Activated naive CD4-positive, alpha-beta T cell treated with anti-CD3 and anti-CD28 coated beads for 36 hours (primary cell): ENCODE measurements at regions of chr16 and their contacts with region 1.

Region 1: GRCh38 chr16:23959072-23959751 is 123.4 kb downstream of the PRKCB start:
- DNase-seq: peak; percentile 32
- H3K4me3 Mint-ChIP-seq: peak overlapping the region; percentile 66
- H3K27ac Mint-ChIP-seq: peak overlapping the region; percentile 81
- H3K4me1 Mint-ChIP-seq: peaks cover 73% of the 10 kb centered on the region
- H3K27me3 Mint-ChIP-seq: no peaks in the 10 kb centered on the region

Region 2: DNA sequence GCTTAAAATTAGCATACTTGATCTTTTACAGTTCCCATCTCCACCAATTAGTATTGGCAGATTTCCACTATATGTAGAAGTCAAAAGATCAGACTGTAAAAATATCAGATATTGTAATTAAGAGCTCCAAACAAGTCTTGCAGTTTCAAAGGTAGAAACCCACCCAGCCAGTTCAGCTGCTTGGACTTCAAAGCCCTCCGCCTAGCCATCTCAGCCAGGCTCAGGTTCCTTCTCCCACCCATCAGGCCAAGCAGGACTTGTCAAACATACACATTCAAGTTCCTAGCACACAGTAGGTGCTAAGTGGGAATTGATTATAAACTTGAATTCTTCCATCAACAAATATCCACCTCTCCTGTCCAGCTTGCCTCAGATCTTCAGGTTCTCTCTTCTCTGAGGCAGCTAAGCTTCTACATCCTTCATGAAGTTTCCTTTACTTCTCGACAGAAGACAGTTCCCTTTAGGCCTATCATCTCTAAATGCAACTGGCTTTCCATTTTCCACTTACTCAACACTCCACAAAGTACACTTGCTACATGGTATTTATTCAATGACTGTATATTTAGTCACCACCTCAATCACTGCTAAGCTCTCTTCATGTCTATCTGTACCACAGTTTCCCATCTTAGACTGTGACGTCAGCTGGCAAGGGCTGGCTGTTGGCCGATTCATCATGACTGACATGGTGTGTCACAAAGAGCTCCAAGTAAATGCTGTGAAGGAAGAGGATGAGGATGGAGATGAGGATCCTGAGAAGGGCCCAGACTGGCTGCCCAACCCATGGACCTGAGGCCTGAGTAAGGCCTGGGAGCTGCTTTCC is 492.9 kb before region 1 on chr16:
- CTCF ChIA-PET with region 1: no interaction called
- intact Hi-C with region 1: no loop called
- DNase-seq: no peak
- H3K4me3 Mint-ChIP-seq: no peak overlapping the region
- H3K27ac Mint-ChIP-seq: peak overlapping the region; percentile 1
- H3K4me1 Mint-ChIP-seq: no peaks in the 10 kb centered on the region
- H3K27me3 Mint-ChIP-seq: no peaks in the 10 kb centered on the region

Region 3: DNA sequence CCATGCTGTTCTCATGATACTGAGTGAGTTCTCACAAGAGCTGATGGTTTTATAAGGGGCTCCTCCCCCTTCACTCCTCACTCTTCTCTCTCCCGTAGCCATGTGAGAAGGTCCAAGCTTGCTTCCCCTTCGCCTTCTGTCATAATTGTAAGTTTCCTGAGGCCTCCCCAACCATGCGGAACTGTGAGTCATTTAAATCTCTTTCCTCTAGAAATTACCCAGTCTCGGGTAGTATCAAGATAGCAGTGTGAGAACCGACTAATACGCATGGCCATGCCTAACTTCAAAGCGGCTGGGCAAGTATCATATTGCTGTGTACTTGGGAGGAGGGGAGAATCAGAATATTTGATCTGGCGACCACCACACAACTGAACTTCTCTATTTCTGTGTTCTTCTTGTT is 35.1 kb before region 1 on chr16:
- CTCF ChIA-PET with region 1: no interaction called
- intact Hi-C with region 1: loop called (anchors 5 kb)
- DNase-seq: peak; percentile 12
- H3K4me3 Mint-ChIP-seq: no peak overlapping the region
- H3K27ac Mint-ChIP-seq: no peak overlapping the region
- H3K4me1 Mint-ChIP-seq: peaks cover 45% of the 10 kb centered on the region
- H3K27me3 Mint-ChIP-seq: no peaks in the 10 kb centered on the region